ENCODE measurements at regions of chr16 and their contacts with region 1.

Region 1: DNA sequence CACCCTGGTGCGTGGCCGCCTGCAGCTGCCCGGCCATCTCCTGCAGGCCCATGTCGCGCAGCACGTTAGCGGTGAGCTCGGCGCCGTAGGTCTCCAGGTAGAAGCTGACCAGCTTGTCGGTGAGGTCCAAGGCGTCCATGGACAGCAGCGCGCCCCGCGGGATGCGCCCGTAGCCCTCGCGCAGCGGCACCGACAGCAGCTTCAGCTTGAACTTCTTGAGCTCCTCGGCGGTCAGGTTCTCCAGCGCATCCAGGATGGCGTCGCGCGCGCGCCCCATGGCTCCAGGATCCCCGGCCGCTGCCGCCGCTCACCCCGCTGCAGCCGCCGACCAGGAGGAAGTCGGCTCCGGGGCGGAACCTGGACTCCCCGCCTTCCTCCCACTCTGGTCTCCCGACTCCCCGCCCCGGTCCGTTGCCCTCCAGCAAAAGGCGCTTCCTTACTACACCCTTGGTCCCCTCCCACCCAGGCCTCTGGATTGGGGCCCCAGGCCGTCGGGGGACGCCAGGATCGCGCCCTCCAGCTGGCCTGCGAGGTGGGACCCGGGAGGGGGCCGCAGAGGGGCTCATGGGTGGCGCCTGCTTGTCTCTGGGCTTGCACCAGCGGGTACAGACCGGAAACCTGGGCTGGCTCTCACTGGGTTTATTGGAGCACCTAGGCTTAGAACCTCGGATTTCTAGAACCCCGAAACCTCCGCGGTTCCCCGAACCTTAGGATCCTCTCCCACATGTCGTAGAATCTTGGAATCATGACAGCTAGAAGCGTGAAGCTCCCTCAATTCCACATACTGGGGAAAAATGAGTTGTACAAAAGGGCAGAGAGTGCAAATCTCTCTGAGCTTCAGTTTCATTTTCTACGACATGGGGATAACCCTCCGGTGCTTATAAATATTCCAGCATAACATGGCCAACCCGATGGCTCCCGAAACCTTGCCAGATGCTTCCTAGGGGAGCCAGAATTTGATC is at the start of gene PYCARD:
- DNase-seq: peak in 6 of 9 donors; percentile 28 to 56 (median 38)
- ATAC-seq: peak; percentile 44
- H3K4me3 ChIP-seq: peak within 1 kb of the TSS; percentile 87
- H3K4me3 Mint-ChIP-seq: peak within 1 kb of the TSS; percentile 71 to 93 (median 90)
- H3K27ac ChIP-seq: peak within 1 kb of the TSS; percentile 73
- H3K27ac Mint-ChIP-seq: peak within 1 kb of the TSS; percentile 68 to 88 (median 85)
- H3K4me1 ChIP-seq: peaks cover 19 to 20% of the 10 kb centered on the region in 2 donors
- H3K4me1 Mint-ChIP-seq: peaks cover 33 to 56% (median 46%) of the 10 kb centered on the region in 7 donors
- H3K27me3 ChIP-seq: no peaks in the 10 kb centered on the region
- H3K27me3 Mint-ChIP-seq: peaks cover 0 to 7% (median 0%) of the 10 kb centered on the region in 5 donors
- total RNA-seq, gene PYCARD: 13.0 to 80.1 (median 21.2) TPM

Region 2: GRCh38 chr16:30874821-30875717 is 327.6 kb before region 1 on chr16:
- CTCF ChIA-PET with region 1: no interaction called
- POLR2A ChIA-PET with region 1: no interaction called
- intact Hi-C with region 1: loop called in 1 of 2 experiments (anchors 5 kb)
- DNase-seq: peak; percentile 78 to 90 (median 87)
- ATAC-seq: peak; percentile 97
- H3K4me3 ChIP-seq: peak overlapping the region; percentile 83
- H3K4me3 Mint-ChIP-seq: peak overlapping the region; percentile 84 to 98 (median 97)
- H3K27ac ChIP-seq: peak overlapping the region; percentile 87
- H3K27ac Mint-ChIP-seq: peak overlapping the region; percentile 79 to 99 (median 95)
- H3K4me1 ChIP-seq: peaks cover 11 to 25% of the 10 kb centered on the region in 2 donors
- H3K4me1 Mint-ChIP-seq: peaks cover 21 to 40% (median 32%) of the 10 kb centered on the region in 7 donors
- H3K27me3 ChIP-seq: no peaks in the 10 kb centered on the region
- H3K27me3 Mint-ChIP-seq: no peaks in the 10 kb centered on the region

Region 3: GRCh38 chr16:31142109-31143010 is 60.3 kb before region 1 on chr16:
- CTCF ChIA-PET with region 1: interaction called, 3 read pairs
- POLR2A ChIA-PET with region 1: interaction called, 23 read pairs
- intact Hi-C with region 1: no loop called
- DNase-seq: peak; percentile 91 to 98 (median 95)
- ATAC-seq: peak; percentile 95
- H3K4me3 ChIP-seq: peak overlapping the region; percentile 68
- H3K4me3 Mint-ChIP-seq: peak overlapping the region; percentile 61 to 84 (median 72)
- H3K27ac ChIP-seq: peak overlapping the region; percentile 74
- H3K27ac Mint-ChIP-seq: peak overlapping the region; percentile 73 to 94 (median 84)
- H3K4me1 ChIP-seq: peaks cover 6 to 14% of the 10 kb centered on the region in 2 donors
- H3K4me1 Mint-ChIP-seq: peaks cover 0 to 17% (median 14%) of the 10 kb centered on the region in 7 donors
- H3K27me3 ChIP-seq: no peaks in the 10 kb centered on the region
- H3K27me3 Mint-ChIP-seq: peaks cover 0 to 3% (median 0%) of the 10 kb centered on the region in 5 donors

Region 4: DNA sequence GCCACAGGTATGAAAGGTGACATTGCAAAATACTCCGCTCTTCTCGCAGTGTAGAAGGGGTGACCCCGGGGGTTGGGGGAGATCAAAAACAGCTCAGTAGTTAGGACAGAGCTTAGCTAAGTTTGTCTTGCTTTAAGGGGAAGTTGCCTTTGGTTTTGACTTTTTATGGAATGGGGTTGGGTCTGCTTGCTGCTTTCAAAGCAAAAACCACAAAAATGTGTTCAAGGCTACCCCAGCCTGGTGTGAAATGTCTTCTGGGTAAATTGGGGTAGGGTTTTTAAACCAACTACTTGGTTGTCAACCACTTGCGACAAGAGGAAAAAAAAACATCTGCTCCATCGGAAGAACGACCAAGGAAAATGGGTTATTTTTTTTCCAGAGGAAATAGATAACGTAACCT is 16.5 kb before region 1 on chr16:
- CTCF ChIA-PET with region 1: no interaction called
- POLR2A ChIA-PET with region 1: interaction called, 35 read pairs
- intact Hi-C with region 1: no loop called
- DNase-seq: peak in 1 of 9 donors; percentile 23
- ATAC-seq: peak; percentile 21
- H3K4me3 ChIP-seq: no peak overlapping the region
- H3K4me3 Mint-ChIP-seq: peak overlapping the region; percentile 54 to 92 (median 70)
- H3K27ac ChIP-seq: peak overlapping the region; percentile 15
- H3K27ac Mint-ChIP-seq: peak overlapping the region; percentile 47 to 90 (median 69)
- H3K4me1 ChIP-seq: peaks cover 52 to 68% of the 10 kb centered on the region in 2 donors
- H3K4me1 Mint-ChIP-seq: peaks cover 83 to 99% (median 95%) of the 10 kb centered on the region in 7 donors
- H3K27me3 ChIP-seq: no peaks in the 10 kb centered on the region
- H3K27me3 Mint-ChIP-seq: no peaks in the 10 kb centered on the region

Region 5: DNA sequence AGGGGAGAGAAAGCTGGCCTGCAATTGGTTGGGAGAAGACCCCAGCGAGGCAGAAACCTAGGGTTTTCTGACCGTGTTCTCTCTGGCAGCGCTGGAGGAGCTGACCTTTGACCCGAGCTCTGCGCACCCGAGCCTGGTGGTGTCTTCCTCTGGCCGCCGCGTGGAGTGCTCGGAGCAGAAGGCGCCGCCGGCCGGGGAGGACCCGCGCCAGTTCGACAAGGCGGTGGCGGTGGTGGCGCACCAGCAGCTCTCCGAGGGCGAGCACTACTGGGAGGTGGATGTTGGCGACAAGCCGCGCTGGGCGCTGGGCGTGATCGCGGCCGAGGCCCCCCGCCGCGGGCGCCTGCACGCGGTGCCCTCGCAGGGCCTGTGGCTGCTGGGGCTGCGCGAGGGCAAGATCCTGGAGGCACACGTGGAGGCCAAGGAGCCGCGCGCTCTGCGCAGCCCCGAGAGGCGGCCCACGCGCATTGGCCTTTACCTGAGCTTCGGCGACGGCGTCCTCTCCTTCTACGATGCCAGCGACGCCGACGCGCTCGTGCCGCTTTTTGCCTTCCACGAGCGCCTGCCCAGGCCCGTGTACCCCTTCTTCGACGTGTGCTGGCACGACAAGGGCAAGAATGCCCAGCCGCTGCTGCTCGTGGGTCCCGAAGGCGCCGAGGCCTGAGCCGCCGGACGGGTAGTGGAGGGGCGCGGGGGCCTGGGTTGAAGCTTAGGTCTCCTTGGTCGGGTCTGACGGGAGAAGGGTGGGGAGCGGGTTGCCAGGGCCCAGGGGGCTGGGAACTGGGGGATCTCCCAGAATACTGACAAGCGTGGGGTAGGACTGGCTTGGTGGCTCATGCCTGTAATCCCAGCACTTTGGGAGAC is 21.6 kb after region 1 on chr16:
- CTCF ChIA-PET with region 1: no interaction called
- POLR2A ChIA-PET with region 1: no interaction called
- intact Hi-C with region 1: no loop called
- DNase-seq: no peak
- ATAC-seq: no peak
- H3K4me3 ChIP-seq: no peak overlapping the region
- H3K4me3 Mint-ChIP-seq: no peak overlapping the region
- H3K27ac ChIP-seq: no peak overlapping the region
- H3K27ac Mint-ChIP-seq: no peak overlapping the region
- H3K4me1 ChIP-seq: no peaks in the 10 kb centered on the region
- H3K4me1 Mint-ChIP-seq: peaks cover 0 to 3% (median 0%) of the 10 kb centered on the region in 7 donors
- H3K27me3 ChIP-seq: no peaks in the 10 kb centered on the region
- H3K27me3 Mint-ChIP-seq: peaks cover 7 to 17% (median 16%) of the 10 kb centered on the region in 5 donors

Region 6: DNA sequence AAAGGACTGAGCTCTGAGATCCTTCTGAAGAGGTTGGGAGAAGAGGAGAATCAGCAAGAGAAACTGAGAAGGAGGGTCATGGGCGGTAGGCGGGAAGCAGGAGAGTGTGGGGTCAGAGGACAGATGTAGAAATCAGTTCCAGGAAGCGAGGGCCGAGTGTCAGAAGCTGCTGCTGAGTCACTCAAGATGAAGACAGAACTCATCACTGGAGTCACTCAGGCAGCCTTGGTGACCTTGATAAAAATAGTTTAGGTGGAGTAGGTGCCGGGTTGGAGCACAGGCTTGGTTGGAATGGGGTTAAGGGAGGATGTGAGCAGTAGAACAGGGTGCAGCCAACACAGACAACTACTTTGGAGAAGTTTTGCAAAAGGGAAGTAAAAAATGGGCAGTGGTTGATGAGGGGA is 50.9 kb after region 1 on chr16:
- CTCF ChIA-PET with region 1: no interaction called
- POLR2A ChIA-PET with region 1: no interaction called
- intact Hi-C with region 1: loop called in 1 of 2 experiments (anchors 5 kb)
- DNase-seq: peak in 2 of 9 donors; percentile 8 to 48
- ATAC-seq: peak; percentile 89
- H3K4me3 ChIP-seq: no peak overlapping the region
- H3K4me3 Mint-ChIP-seq: peak overlapping the region in 1 of 10 donors; percentile 84
- H3K27ac ChIP-seq: no peak overlapping the region
- H3K27ac Mint-ChIP-seq: peak overlapping the region in 3 of 9 donors; percentile 2 to 92 (median 5)
- H3K4me1 ChIP-seq: no peaks in the 10 kb centered on the region
- H3K4me1 Mint-ChIP-seq: peaks cover 0 to 57% (median 8%) of the 10 kb centered on the region in 7 donors
- H3K27me3 ChIP-seq: no peaks in the 10 kb centered on the region
- H3K27me3 Mint-ChIP-seq: no peaks in the 10 kb centered on the region

Region 7: GRCh38 chr16:31265329-31266245 is 62.9 kb after region 1 on chr16:
- CTCF ChIA-PET with region 1: no interaction called
- POLR2A ChIA-PET with region 1: no interaction called
- intact Hi-C with region 1: no loop called
- DNase-seq: peak in 2 of 9 donors; percentile 22 to 81
- ATAC-seq: peak; percentile 93
- H3K4me3 ChIP-seq: no peak overlapping the region
- H3K4me3 Mint-ChIP-seq: peak overlapping the region in 2 of 10 donors; percentile 49 to 68
- H3K27ac ChIP-seq: no peak overlapping the region
- H3K27ac Mint-ChIP-seq: peak overlapping the region in 2 of 9 donors; percentile 61 to 93
- H3K4me1 ChIP-seq: peaks cover 0 to 16% of the 10 kb centered on the region in 2 donors
- H3K4me1 Mint-ChIP-seq: peaks cover 0 to 57% (median 6%) of the 10 kb centered on the region in 7 donors
- H3K27me3 ChIP-seq: no peaks in the 10 kb centered on the region
- H3K27me3 Mint-ChIP-seq: peaks cover 0 to 18% (median 4%) of the 10 kb centered on the region in 5 donors

Region 8: GRCh38 chr16:31286421-31287032 is 83.8 kb after region 1 on chr16:
- CTCF ChIA-PET with region 1: no interaction called
- POLR2A ChIA-PET with region 1: no interaction called
- intact Hi-C with region 1: no loop called
- DNase-seq: no peak
- ATAC-seq: no peak
- H3K4me3 ChIP-seq: no peak overlapping the region
- H3K4me3 Mint-ChIP-seq: no peak overlapping the region
- H3K27ac ChIP-seq: no peak overlapping the region
- H3K27ac Mint-ChIP-seq: no peak overlapping the region
- H3K4me1 ChIP-seq: peaks cover 0 to 7% of the 10 kb centered on the region in 2 donors
- H3K4me1 Mint-ChIP-seq: peaks cover 0 to 28% (median 5%) of the 10 kb centered on the region in 7 donors
- H3K27me3 ChIP-seq: no peaks in the 10 kb centered on the region
- H3K27me3 Mint-ChIP-seq: peaks cover 0 to 15% (median 4%) of the 10 kb centered on the region in 5 donors

Region 9: GRCh38 chr16:31333686-31334649 is 131.3 kb after region 1 on chr16:
- CTCF ChIA-PET with region 1: no interaction called
- POLR2A ChIA-PET with region 1: no interaction called
- intact Hi-C with region 1: loop called (anchors 5 kb)
- DNase-seq: peak in 5 of 9 donors; percentile 25 to 47 (median 34)
- ATAC-seq: peak; percentile 87
- H3K4me3 ChIP-seq: no peak overlapping the region
- H3K4me3 Mint-ChIP-seq: peak overlapping the region in 1 of 10 donors; percentile 34
- H3K27ac ChIP-seq: peak overlapping the region; percentile 1
- H3K27ac Mint-ChIP-seq: peak overlapping the region in 7 of 9 donors; percentile 26 to 95 (median 48)
- H3K4me1 ChIP-seq: peaks cover 0 to 3% of the 10 kb centered on the region in 2 donors
- H3K4me1 Mint-ChIP-seq: peaks cover 16 to 48% (median 28%) of the 10 kb centered on the region in 7 donors
- H3K27me3 ChIP-seq: no peaks in the 10 kb centered on the region
- H3K27me3 Mint-ChIP-seq: peaks cover 0 to 17% (median 10%) of the 10 kb centered on the region in 5 donors

Region 10: DNA sequence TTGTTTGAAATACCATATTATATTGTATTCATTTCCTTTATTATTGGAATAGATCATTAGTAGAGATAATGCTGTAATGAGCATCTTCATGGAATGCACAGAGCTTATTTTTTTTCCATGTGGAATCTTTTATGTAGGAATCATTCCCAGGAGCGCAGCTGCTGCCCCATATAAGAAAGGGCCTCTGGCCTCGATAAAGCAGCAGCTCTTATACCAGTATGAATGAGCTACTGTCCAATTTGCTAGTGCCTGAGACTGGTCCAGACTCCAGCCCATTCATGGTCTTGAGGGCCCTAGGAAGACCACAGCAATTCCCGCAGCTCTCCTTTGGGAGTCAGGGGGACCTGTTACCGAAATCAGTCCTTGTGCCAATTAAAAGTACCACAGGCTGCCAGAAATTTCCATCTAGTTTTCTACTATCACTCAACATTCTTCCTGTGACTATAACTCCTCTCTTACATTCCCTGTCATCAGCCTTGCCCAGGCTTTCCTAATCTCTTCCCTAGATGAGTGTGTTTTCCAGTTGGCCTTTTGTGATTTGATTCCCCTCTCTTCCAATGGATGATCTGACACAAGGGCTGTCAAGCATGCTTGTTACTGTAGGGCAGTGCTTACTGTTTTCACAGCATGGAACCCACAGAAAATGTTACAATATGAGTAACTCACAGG is 238.0 kb after region 1 on chr16:
- CTCF ChIA-PET with region 1: interaction called, 3 read pairs
- POLR2A ChIA-PET with region 1: no interaction called
- intact Hi-C with region 1: loop called (anchors 2 to 5 kb)
- DNase-seq: no peak
- ATAC-seq: no peak
- H3K4me3 ChIP-seq: no peak overlapping the region
- H3K4me3 Mint-ChIP-seq: peak overlapping the region in 1 of 10 donors; percentile 22
- H3K27ac ChIP-seq: no peak overlapping the region
- H3K27ac Mint-ChIP-seq: no peak overlapping the region
- H3K4me1 ChIP-seq: no peaks in the 10 kb centered on the region
- H3K4me1 Mint-ChIP-seq: peaks cover 0 to 23% (median 9%) of the 10 kb centered on the region in 7 donors
- H3K27me3 ChIP-seq: no peaks in the 10 kb centered on the region
- H3K27me3 Mint-ChIP-seq: peaks cover 0 to 3% (median 0%) of the 10 kb centered on the region in 5 donors

Region 11: DNA sequence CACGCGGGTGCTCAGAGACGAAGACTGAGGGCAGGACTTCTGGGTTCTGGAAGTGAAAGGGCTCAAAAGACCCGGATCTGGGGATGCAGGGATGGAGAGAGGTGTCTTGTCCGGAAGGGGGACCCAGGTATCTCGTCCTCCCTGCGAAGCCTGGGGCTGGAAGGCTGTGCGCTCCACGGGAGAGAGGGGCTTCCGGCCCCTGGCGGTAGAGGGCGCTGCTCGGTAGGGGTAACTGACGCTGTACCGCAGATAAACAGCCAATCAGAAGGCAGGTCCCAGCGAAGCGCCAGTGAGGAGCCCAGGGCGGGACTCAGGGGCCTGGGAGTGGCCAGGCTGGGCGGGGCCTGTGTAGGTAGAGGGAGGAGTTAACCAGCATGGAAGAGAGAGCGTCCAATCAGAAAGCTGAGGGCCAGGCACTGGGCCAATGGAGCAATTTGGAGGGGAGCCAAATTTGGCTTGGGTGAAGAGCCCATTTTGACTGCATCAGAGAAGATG is 270.1 kb after region 1 on chr16:
- CTCF ChIA-PET with region 1: no interaction called
- POLR2A ChIA-PET with region 1: no interaction called
- intact Hi-C with region 1: no loop called
- DNase-seq: peak in 1 of 9 donors; percentile 36
- ATAC-seq: peak; percentile 33
- H3K4me3 ChIP-seq: no peak overlapping the region
- H3K4me3 Mint-ChIP-seq: peak overlapping the region; percentile 60 to 84 (median 79)
- H3K27ac ChIP-seq: no peak overlapping the region
- H3K27ac Mint-ChIP-seq: peak overlapping the region in 1 of 9 donors; percentile 64
- H3K4me1 ChIP-seq: peaks cover 4 to 6% of the 10 kb centered on the region in 2 donors
- H3K4me1 Mint-ChIP-seq: peaks cover 8 to 29% (median 21%) of the 10 kb centered on the region in 7 donors
- H3K27me3 ChIP-seq: no peaks in the 10 kb centered on the region
- H3K27me3 Mint-ChIP-seq: peaks cover 0 to 52% (median 14%) of the 10 kb centered on the region in 5 donors